Dendritic cell treated with granulocyte-macrophage colony-stimulating factor and Interleukin-4, amounts not matched to agents 40 ng/mL and 50 ng/mL, for 4 days (primary cell): ENCODE measurements at regions of chr17 and their contacts with region 1.

Region 1: GRCh38 chr17:27236717-27237315 is 57.1 kb upstream of the WSB1 start:
- H3K4me3 Mint-ChIP-seq: no peak overlapping the region
- H3K27ac Mint-ChIP-seq: no peak overlapping the region
- H3K4me1 Mint-ChIP-seq: peaks cover 67% of the 10 kb centered on the region
- H3K27me3 Mint-ChIP-seq: no peaks in the 10 kb centered on the region

Region 2: DNA sequence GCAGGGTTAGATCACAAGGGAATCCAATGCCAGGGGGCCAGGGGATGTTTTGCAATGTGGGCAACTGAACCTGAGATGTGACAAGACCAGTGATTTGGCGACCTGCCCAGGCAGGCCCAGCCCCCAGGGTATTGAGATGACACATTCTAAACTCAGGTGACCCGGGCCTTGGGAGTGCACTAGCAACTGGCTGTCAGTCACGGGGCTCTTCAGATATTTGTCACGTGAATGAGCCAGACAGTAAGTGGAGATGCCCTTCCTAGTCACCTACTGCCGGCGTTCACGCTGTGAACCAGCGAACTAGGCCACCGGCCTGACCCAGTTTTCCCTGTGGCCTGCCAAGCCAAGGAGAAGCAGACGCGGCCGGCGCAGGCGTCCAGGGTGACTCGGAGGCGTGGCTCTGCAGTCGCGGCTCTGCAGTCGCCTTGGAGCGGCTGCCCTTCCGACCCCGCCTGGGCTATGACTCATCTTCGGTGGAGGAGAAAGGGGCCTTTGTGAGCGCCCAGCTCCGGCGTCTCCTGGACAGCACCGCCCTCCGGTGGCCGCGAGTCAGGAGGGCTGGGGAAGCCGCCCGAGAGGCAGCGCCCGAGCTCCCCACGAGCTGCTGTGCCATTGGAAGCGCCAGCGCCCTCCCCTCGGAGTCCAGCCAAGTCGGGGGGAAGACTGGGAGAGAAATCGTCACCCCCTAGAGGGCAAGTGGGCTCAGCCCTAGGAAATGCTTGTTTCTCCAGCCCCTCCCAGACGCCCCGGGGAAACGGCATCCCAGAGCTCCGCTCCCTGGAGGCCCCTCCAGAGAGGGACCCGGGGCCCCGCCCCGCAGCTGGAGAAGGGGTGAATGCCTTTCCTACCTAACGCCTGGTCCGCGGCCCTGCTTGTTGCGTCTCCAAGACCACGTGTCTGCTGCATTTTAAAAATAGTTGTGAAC is 95.9 kb after region 1 on chr17:
- intact Hi-C with region 1: loop called (anchors 1 kb)
- H3K4me3 Mint-ChIP-seq: peak overlapping the region; percentile 73
- H3K27ac Mint-ChIP-seq: peak overlapping the region; percentile 92
- H3K4me1 Mint-ChIP-seq: peaks cover 61% of the 10 kb centered on the region
- H3K27me3 Mint-ChIP-seq: no peaks in the 10 kb centered on the region

Region 3: GRCh38 chr17:27455914-27456680 is 219.3 kb after region 1 on chr17 and contains the start of gene KSR1:
- intact Hi-C with region 1: loop called (anchors 10 kb)
- H3K4me3 Mint-ChIP-seq: peak within 1 kb of the TSS; percentile 86
- H3K27ac Mint-ChIP-seq: peak within 1 kb of the TSS; percentile 79
- H3K4me1 Mint-ChIP-seq: peaks cover 25% of the 10 kb centered on the region
- H3K27me3 Mint-ChIP-seq: peaks cover 6% of the 10 kb centered on the region

Region 4: GRCh38 chr17:27532269-27533263 is 295.8 kb after region 1 on chr17:
- intact Hi-C with region 1: loop called (anchors 5 kb)
- H3K4me3 Mint-ChIP-seq: no peak overlapping the region
- H3K27ac Mint-ChIP-seq: peak overlapping the region; percentile 65
- H3K4me1 Mint-ChIP-seq: peaks cover 75% of the 10 kb centered on the region
- H3K27me3 Mint-ChIP-seq: no peaks in the 10 kb centered on the region

Region 5: GRCh38 chr17:27601069-27601975 is 364.5 kb after region 1 on chr17:
- intact Hi-C with region 1: loop called (anchors 1 kb)
- H3K4me3 Mint-ChIP-seq: no peak overlapping the region
- H3K27ac Mint-ChIP-seq: no peak overlapping the region
- H3K4me1 Mint-ChIP-seq: peaks cover 5% of the 10 kb centered on the region
- H3K27me3 Mint-ChIP-seq: no peaks in the 10 kb centered on the region